ENCODE measurements at regions of chr12 and their contacts with region 1.

Region 1: GRCh38 chr12:49358483-49359141 is 8.7 kb upstream of the SPATS2 start:
- DNase-seq: peak; percentile 69
- H3K4me3 Mint-ChIP-seq: no peak overlapping the region
- H3K27ac Mint-ChIP-seq: no peak overlapping the region
- H3K4me1 Mint-ChIP-seq: peaks cover 5% of the 10 kb centered on the region
- H3K27me3 Mint-ChIP-seq: peaks cover 21% of the 10 kb centered on the region

Region 2: GRCh38 chr12:49296034-49296835 is 62.4 kb before region 1 on chr12:
- CTCF ChIA-PET with region 1: interaction called, 82 read pairs
- POLR2A ChIA-PET with region 1: no interaction called
- intact Hi-C with region 1: no loop called
- DNase-seq: peak; percentile 75
- H3K4me3 Mint-ChIP-seq: no peak overlapping the region
- H3K27ac Mint-ChIP-seq: no peak overlapping the region
- H3K4me1 Mint-ChIP-seq: peaks cover 12% of the 10 kb centered on the region
- H3K27me3 Mint-ChIP-seq: peaks cover 51% of the 10 kb centered on the region

Region 3: GRCh38 chr12:49397000-49397399 is 38.4 kb after region 1 on chr12:
- CTCF ChIA-PET with region 1: interaction called, 15 read pairs
- POLR2A ChIA-PET with region 1: no interaction called
- intact Hi-C with region 1: no loop called
- DNase-seq: no peak
- H3K4me3 Mint-ChIP-seq: no peak overlapping the region
- H3K27ac Mint-ChIP-seq: no peak overlapping the region
- H3K4me1 Mint-ChIP-seq: no peaks in the 10 kb centered on the region
- H3K27me3 Mint-ChIP-seq: no peaks in the 10 kb centered on the region

Region 4: GRCh38 chr12:49496417-49497360 is 138.1 kb after region 1 on chr12:
- CTCF ChIA-PET with region 1: interaction called, 14 read pairs
- POLR2A ChIA-PET with region 1: no interaction called
- intact Hi-C with region 1: no loop called
- DNase-seq: no peak
- H3K4me3 Mint-ChIP-seq: no peak overlapping the region
- H3K27ac Mint-ChIP-seq: no peak overlapping the region
- H3K4me1 Mint-ChIP-seq: no peaks in the 10 kb centered on the region
- H3K27me3 Mint-ChIP-seq: no peaks in the 10 kb centered on the region

Region 5: DNA sequence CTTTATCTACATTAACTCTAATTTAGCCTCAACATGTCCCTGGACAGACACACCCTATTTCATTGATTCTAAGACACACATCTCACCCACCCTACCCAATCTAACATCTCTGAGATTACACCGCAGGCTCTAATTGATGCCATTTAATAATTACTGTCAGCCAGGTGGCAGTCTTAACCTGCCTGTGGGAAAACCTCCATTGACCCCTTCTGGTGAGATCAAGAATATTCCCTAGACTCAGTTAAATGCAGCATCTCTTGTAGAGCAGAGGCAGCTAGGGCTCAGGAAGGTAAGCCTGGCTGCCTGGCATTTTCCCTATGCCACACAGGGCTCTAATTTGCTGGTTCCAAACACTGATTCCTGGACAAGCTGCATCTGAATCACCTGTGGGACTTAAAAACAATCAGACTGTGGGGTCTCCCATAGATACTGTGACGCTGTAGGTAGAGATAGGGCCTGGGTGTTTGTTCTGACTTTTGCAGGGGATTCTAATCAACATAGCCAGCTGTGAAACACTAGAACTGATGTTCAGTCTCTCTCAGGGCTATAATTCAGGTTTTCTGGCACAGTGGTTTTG is 195.0 kb after region 1 on chr12:
- CTCF ChIA-PET with region 1: interaction called, 23 read pairs
- POLR2A ChIA-PET with region 1: no interaction called
- intact Hi-C with region 1: loop called (anchors 1 kb)
- DNase-seq: no peak
- H3K4me3 Mint-ChIP-seq: no peak overlapping the region
- H3K27ac Mint-ChIP-seq: no peak overlapping the region
- H3K4me1 Mint-ChIP-seq: peaks cover 3% of the 10 kb centered on the region
- H3K27me3 Mint-ChIP-seq: peaks cover 4% of the 10 kb centered on the region

Region 6: GRCh38 chr12:49707128-49707811 is 348.7 kb after region 1 on chr12 and contains the start of gene FMNL3:
- CTCF ChIA-PET with region 1: interaction called, 10 read pairs
- POLR2A ChIA-PET with region 1: no interaction called
- intact Hi-C with region 1: loop called (anchors 5 kb)
- DNase-seq: peak; percentile 98
- H3K4me3 Mint-ChIP-seq: peak within 1 kb of the TSS; percentile 85
- H3K27ac Mint-ChIP-seq: peak within 1 kb of the TSS; percentile 72
- H3K4me1 Mint-ChIP-seq: peaks cover 43% of the 10 kb centered on the region
- H3K27me3 Mint-ChIP-seq: peaks cover 3% of the 10 kb centered on the region
- total RNA-seq, gene FMNL3: 31.2 to 31.9 TPM